MCF 10A (cell line): ENCODE measurements at regions of chr5 and their contacts with region 1.

Region 1: GRCh38 chr5:28344803-28345433 is 1306.5 kb upstream of the CDH9 start:
- DNase-seq: peak; percentile 60
- H3K4me3 Mint-ChIP-seq: no peak overlapping the region
- H3K27ac Mint-ChIP-seq: no peak overlapping the region
- H3K4me1 Mint-ChIP-seq: no peaks in the 10 kb centered on the region
- H3K27me3 Mint-ChIP-seq: no peaks in the 10 kb centered on the region
- CTCF ChIP-seq: peak; percentile 64

Region 2: GRCh38 chr5:28576022-28576421 is 231.1 kb after region 1 on chr5:
- CTCF ChIA-PET with region 1: interaction called, 6 read pairs
- POLR2A ChIA-PET with region 1: no interaction called
- intact Hi-C with region 1: loop called (anchors 5 kb)
- DNase-seq: peak; percentile 22
- H3K4me3 Mint-ChIP-seq: no peak overlapping the region
- H3K27ac Mint-ChIP-seq: no peak overlapping the region
- H3K4me1 Mint-ChIP-seq: peaks cover 25% of the 10 kb centered on the region
- H3K27me3 Mint-ChIP-seq: no peaks in the 10 kb centered on the region
- CTCF ChIP-seq: peak; percentile 25